ENCODE measurements at regions of chr17 and their contacts with region 1.

Region 1: DNA sequence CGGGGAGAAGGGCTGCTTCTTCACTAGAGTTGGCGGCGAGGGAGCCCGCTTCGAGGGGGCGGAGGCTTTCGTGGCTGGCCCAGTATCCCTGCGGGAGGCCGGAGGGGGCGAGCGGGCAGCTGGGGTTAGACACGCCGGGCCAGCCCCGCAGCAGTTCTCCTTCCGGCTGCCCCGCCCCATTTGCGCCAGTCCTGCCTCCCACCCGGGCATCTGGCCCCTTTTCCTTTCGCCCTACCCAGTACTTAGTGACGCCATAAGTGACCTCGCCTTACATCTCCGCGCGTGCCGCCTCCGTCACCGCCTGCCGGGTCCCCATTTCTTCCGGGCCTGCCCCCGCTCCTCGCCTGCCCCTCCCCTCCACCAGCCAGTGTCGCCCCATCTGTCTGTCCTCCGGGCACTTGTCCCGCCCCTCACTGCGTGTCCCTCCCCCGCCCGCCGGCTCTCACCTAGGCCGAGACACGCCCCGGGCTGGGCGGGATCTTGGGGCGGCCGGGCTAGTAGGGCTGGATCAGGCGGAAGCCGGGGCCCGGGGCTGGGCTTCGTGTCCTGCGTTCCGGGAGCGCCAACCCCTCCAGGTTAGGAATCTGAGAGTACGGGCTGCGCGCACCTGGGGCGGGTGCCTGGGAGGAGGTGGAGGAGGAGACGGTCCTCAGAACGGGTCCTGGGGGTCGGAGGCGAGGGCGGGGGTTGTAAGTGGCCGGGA is 14.3 kb downstream of the SPATA32 start:
- DNase-seq: peak; percentile 51
- H3K4me3 ChIP-seq: peak overlapping the region; percentile 67
- H3K27ac ChIP-seq: peak overlapping the region; percentile 57
- H3K27me3 ChIP-seq: no peaks in the 10 kb centered on the region
- CTCF ChIP-seq: no peak

Region 2: GRCh38 chr17:45235416-45236281 is 11.9 kb before region 1 on chr17:
- CTCF ChIA-PET with region 1: interaction called, 22 read pairs
- POLR2A ChIA-PET with region 1: no interaction called
- DNase-seq: peak; percentile 49
- H3K4me3 ChIP-seq: no peak overlapping the region
- H3K27ac ChIP-seq: no peak overlapping the region
- H3K27me3 ChIP-seq: peaks cover 10% of the 10 kb centered on the region
- CTCF ChIP-seq: peak; percentile 81

Region 3: GRCh38 chr17:45261577-45262515 is 14.3 kb after region 1 on chr17 and contains the start of gene SPATA32:
- CTCF ChIA-PET with region 1: no interaction called
- POLR2A ChIA-PET with region 1: no interaction called
- DNase-seq: no peak
- H3K4me3 ChIP-seq: peak within 1 kb of the TSS; percentile 56
- H3K27ac ChIP-seq: no peak within 1 kb of the TSS
- H3K27me3 ChIP-seq: no peaks in the 10 kb centered on the region
- CTCF ChIP-seq: no peak
- polyA plus RNA-seq, gene SPATA32: not detected in 2 replicates

Region 4: DNA sequence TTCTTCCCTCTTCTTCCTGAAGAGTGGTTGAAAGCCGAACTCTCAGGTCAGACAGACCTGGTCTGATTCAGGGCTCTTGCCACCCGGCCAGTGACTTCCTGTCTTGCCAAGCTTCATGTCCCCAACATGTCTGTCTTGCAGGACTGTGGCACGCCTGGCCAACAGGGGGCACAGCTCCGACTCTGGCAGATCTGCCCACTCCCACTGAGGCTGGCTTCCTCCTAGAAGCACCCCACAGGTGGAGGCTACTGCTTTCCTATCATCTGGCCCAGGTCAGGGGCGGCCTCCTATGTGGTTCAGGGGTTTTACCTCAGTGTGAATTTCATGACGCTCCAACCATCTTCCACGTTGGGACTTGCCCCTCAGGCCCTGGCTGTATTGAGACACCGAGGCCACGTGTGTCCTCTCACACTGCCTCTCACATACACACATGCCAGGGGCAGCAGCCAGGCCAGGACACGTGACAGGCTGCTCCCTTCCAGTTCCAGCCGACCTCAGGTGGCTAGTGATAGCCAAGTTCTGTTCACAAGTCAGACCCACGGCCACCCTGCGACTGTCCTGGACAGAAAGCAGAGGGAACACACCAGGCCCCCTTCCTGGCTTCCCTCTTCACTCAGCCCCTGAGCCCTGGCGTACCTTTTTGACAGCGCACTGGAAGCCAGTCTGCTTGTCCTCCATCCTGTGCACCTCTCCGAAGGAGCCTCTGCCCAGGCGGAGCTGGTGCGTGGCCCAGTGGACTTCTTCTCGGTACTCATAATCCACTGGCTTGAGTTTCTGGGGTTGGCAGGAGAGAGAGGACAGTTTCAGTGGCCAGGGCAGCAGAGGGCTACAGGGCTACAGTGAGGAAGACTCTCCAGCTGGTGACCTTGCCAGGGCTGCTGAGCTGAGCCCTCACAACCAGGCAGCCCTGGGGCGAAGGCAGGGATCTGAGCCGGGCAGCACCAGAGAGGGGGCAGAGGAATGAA is 36.9 kb after region 1 on chr17:
- CTCF ChIA-PET with region 1: no interaction called
- POLR2A ChIA-PET with region 1: no interaction called
- DNase-seq: no peak
- H3K4me3 ChIP-seq: no peak overlapping the region
- H3K27ac ChIP-seq: no peak overlapping the region
- H3K27me3 ChIP-seq: no peaks in the 10 kb centered on the region
- CTCF ChIP-seq: peak; percentile 19; the same call in 1 of the 2 replicates